ENCODE measurements at regions of chr19 and their contacts with region 1.

Region 1: GRCh38 chr19:7903244-7904073 is at the start of gene MAP2K7:
- DNase-seq: peak; percentile 100
- ATAC-seq: peak; percentile 94
- total RNA-seq, gene MAP2K7: 28.0 TPM

Region 2: GRCh38 chr19:7808133-7808532 is 95.3 kb before region 1 on chr19:
- intact Hi-C with region 1: no loop called
- DNase-seq: no peak
- ATAC-seq: no peak

Region 3: GRCh38 chr19:7819337-7819736 is 84.1 kb before region 1 on chr19:
- intact Hi-C with region 1: no loop called
- DNase-seq: no peak
- ATAC-seq: no peak

Region 4: DNA sequence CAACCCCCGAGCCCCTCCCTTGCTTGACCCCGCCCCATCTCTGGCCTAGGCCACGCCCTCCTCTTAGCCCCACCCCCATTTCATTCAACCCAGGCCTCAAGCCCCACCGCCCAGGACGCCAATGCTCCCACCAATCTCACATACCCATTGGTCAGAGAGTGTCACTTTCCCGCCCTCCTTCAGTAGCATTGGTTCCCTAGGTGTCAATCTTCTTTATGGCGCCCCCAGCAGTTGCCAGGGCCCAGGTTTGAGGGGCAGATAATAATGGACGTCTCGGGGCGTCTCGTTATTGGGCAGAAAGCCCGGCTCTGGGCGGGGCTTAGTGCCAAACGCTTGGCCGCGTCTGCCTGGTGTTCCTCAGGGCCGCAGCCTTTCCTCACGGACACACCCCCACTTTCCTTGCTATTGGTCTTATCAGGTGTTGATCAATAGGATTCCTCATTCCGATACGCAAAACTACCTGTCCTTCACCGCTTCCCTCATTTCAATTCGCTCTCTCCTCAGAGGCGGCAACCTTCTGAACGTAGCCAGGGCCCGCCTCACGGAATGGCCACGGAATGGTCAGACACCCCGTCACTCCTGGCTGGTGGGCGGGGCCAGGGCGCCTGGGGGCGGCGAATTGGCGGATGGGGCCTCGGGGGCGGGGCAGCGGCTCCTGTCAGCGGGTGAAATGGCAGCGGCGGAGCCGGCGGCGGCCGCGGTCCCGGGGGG is 73.7 kb before region 1 on chr19 and contains the start of gene EVI5L:
- intact Hi-C with region 1: loop called (anchors 1 kb)
- DNase-seq: peak; percentile 99
- ATAC-seq: peak; percentile 93
- total RNA-seq, gene EVI5L: 21.5 TPM

Region 5: DNA sequence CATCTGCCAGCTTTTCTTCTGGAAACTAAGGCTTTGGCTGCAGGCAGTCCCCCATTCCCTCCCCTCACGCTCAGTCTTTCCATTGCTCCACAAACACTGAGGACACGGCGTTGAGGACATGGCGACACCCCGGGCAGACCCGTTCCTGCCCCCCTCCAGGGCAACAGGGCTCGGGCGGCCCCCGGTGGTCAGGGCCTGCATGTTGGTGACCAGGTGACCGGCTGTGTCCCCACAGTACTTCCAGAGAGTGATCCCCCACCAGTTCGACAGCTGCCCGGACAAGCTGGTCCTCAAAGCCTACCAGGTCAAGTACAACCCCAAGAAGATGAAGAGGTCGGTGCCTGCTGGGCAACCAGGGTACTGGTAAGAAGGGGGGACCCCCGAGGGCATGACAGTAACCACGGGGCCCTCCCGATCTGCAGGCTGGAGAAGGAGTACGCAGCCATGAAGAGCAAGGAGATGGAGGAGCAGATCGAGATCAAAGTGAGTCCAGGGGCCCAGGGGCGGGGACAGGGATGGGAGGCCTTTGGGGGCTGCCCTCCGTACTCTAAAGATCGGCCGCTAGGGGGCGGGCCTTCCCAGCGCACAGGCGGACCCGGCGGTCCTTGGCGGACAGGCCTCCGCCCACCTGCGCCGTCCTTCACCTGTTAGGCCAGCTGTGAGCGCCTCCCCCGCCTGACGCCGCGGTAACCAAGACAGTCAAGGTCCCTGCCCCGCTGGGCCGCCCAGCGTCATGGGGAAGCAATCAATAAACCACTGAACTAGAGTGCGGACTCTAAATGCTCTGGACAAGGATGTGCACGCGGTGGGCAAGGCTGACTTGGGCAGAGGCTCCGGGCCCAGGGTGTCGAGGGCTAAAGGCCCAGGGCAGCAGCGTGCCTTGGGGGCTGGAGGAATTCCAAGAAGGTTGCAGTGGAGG is 50.3 kb before region 1 on chr19:
- intact Hi-C with region 1: loop called (anchors 5 kb)
- DNase-seq: peak; percentile 86
- ATAC-seq: peak; percentile 55

Region 6: DNA sequence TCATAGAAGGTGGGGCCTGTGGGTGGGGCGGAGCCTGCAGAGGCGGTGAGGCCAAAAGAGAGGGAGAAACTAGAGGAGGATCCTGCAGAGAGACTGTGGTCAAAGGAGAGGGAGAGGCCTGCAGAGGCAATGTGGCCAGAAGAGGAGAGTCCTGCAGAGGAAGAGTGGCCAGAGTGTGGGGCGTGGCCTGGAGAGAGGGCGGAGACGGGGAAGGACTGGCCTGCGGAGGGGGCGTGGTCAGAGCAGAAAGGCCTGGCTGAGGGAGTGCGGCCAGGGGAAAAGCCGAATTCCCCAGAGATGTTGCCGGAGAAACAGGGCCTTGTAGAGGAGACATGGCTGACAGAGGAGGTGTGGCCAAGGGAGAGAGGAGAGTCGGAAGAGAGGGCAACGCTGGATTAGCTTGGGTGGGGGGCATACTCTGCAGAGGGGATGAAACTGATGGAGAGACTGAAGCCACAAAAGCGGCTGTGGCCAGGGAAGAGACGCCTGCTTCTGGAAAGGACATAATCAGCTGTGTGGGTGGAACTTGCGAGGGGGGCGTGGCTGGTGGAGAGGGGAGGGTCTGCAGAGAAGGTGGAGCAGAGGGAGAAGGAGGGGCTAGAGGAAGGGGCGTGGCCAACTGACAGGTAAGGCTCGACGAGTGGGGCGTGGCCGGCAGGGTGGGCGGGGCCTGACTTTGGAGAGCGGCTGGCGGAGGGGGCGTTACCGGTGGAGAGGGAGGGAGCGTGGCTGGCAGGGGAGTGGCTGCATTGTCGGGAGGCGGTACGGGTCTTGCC is 31.7 kb before region 1 on chr19:
- intact Hi-C with region 1: loop called (anchors 2 kb)
- DNase-seq: peak; percentile 91
- ATAC-seq: peak; percentile 65

Region 7: GRCh38 chr19:7919610-7920518 is 16.4 kb after region 1 on chr19 and contains the start of gene SNAPC2:
- intact Hi-C with region 1: loop called (anchors 1 kb)
- DNase-seq: peak; percentile 99
- ATAC-seq: peak; percentile 72
- total RNA-seq, gene SNAPC2: 10.3 TPM

Region 8: DNA sequence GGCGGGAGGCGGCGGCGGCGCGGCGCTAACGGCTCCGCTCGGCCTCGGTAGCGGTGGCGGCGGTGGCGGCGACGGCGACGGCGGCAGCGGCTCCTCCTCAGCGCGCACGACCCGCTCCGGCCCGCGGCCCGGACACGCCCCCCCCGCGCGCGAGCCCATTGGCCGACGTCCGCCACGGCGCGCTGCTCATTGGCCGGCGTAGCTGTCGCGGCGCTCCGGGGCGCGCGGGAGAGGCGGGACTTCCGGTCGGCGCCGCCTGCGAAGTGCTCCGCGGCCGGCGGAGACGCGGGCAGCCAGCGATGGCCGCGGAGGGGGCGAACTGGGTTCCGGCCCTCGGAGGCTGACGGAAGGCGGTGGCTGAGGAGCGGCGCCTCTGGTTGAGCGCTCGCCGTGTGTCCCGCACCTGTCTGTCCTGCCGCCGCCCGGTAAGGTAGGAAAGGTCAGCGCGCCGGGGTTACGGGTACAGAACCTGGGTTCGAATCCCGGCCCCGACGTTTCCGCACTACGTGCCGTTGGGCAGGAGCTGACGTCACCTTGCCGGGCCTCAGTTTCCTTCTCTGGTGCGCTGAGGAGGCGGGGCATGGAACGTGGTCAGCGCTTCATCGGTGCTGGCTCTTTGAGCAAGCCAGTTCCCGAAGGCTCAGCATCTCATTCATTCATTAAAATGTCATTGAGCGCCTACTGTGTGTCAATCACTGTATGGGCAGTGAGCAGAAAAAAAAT is 102.2 kb after region 1 on chr19 and contains the start of gene ELAVL1:
- intact Hi-C with region 1: no loop called
- DNase-seq: peak; percentile 94
- ATAC-seq: peak; percentile 94
- total RNA-seq, gene ELAVL1: 55.1 TPM

Region 9: DNA sequence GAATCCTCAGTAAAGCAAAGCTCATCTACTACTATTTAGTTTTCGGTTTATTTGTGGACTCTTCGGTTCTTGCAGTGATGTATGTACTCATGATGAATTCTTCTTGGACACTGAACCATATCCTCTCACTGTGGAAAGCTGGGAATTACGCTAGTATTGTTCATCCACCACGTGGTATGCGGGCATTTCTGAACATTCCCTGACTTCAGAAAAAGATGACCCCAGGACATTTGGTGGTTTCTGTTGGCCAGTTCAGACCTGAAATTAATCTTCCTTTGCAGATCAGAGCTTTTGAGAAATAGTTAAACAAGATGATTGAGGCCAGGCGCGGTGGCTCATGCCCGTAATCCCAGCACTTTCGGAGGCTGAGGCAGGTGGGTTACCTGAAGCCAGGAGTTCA is 271.2 kb after region 1 on chr19:
- intact Hi-C with region 1: no loop called
- DNase-seq: no peak
- ATAC-seq: no peak

Measured in Right ventricle myocardium inferior (tissue), 1 donor.